Body of pancreas (tissue), 4 donors: ENCODE measurements at regions of chr4 and their contacts with region 1.

Region 1: DNA sequence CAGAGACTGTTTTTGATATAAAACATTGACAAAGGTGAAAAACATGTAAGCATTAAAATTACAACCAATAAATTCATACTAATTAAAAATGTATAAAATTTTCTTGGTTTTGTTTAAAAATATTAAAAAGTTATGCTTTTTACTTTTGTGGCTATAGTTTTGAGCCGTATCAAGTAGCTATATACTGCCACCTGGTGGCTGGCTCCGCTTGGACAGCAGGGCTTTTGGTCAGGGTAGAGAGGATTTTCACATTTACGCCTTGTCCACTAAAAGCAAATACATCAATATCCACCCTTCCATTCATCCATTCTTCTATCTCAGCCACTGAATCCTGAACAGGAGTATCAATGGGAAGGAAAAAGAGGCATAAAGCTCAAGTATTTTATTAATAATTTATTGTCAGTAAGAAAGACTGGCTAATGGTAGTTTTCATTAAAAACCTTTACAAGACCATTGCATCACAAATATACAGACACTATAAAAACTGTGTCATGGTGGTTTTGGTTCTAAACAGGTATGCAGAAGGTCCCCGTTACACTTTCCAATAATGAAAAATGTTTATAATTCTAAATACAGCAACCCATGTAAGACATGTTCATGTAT is 32.1 kb upstream of the MTNR1A start:
- DNase-seq: peak; percentile 73 to 87 (median 80)
- ATAC-seq: peak; percentile 72
- H3K4me3 ChIP-seq: no peak overlapping the region
- H3K27ac ChIP-seq: no peak overlapping the region
- H3K4me1 ChIP-seq: peaks cover 7% of the 10 kb centered on the region
- H3K27me3 ChIP-seq: no peaks in the 10 kb centered on the region
- CTCF ChIP-seq: peak; percentile 72 to 98 (median 80)
- POLR2A ChIP-seq: no peak

Region 2: GRCh38 chr4:186297013-186297645 is 290.4 kb before region 1 on chr4:
- intact Hi-C with region 1: loop called (anchors 5 kb)
- DNase-seq: no peak
- ATAC-seq: no peak
- H3K4me3 ChIP-seq: no peak overlapping the region
- H3K27ac ChIP-seq: no peak overlapping the region
- H3K4me1 ChIP-seq: no peaks in the 10 kb centered on the region
- H3K27me3 ChIP-seq: no peaks in the 10 kb centered on the region
- CTCF ChIP-seq: peak in 6 of 7 experiments; percentile 62 to 84 (median 81)
- POLR2A ChIP-seq: no peak